GM12878 (cell line): ENCODE measurements at regions of chr3 and their contacts with region 1.

Region 1: GRCh38 chr3:55662683-55663082 is 175.6 kb upstream of the WNT5A start:
- DNase-seq: no peak
- ATAC-seq: no peak
- H3K4me3 ChIP-seq: no peak overlapping the region
- H3K27ac ChIP-seq: no peak overlapping the region
- H3K4me1 ChIP-seq: peaks cover 35% of the 10 kb centered on the region
- H3K27me3 ChIP-seq: no peaks in the 10 kb centered on the region
- CTCF ChIP-seq: no peak
- EP300 ChIP-seq: no peak
- POLR2A ChIP-seq: no peak
- RAD21 ChIP-seq: no peak

Region 2: DNA sequence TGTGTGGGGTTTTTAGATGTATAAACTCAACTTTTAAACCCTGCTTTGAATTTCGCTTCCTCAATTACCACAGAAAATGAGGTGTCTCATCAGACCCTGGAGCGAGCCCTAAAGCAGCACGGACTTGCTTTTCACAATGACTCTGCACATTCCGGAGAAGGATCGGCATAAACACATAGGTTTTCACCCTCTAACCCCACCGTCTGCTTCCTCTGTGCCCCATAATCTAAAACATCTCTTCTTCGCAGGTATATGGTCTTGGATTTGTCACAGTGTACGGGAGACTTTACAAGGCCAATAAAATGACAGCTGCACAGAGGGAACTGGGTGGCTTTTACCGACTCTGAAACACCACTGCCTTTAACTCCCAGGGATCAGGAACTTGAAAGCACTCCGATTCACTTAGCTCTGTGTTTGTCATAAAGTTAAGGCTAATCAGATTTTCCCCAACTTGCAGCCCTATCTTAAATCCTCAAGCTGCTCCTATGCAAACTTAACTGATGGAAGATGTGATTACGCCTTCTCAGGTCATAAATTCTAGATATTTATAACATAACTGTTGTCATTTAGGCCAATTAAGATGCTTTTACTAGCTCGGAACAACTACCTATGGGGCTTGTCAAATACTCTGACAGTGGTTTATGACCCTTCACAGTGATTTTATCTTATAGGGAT is 42.2 kb before region 1 on chr3:
- CTCF ChIA-PET with region 1: interaction called, 6 read pairs
- POLR2A ChIA-PET with region 1: interaction called, 3 read pairs
- RAD21 ChIA-PET with region 1: interaction called, 7 read pairs
- SMC1A ChIA-PET with region 1: interaction called, 30 read pairs
- in situ Hi-C with region 1: no loop called
- intact Hi-C with region 1: no loop called
- DNase-seq: peak; percentile 59
- ATAC-seq: peak; percentile 84
- H3K4me3 ChIP-seq: peak overlapping the region; percentile 18; the same call in 1 of the 2 replicates
- H3K27ac ChIP-seq: peak overlapping the region; percentile 75
- H3K4me1 ChIP-seq: peaks cover 47% of the 10 kb centered on the region
- H3K27me3 ChIP-seq: no peaks in the 10 kb centered on the region
- CTCF ChIP-seq: no peak
- EP300 ChIP-seq: no peak
- POLR2A ChIP-seq: no peak
- RAD21 ChIP-seq: no peak

Region 3: DNA sequence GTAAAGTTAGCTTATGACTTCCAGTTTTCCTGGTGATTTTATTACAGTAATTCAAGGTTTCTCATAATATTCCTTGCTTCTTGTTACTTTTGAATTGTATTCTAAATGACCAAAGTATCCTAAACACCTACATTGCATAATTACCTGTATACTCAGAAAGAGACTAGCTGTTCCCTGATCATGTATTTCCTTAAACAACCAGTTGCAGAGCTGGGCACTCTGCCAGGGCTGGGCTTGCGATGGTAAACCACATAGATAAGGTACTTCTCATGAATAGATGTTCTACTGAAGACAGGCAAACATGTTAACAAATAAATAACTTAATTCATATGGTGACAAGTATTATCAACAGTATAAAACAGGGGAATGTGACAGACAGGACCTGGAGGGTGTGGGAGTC is 33.3 kb before region 1 on chr3:
- CTCF ChIA-PET with region 1: interaction called, 4 read pairs
- POLR2A ChIA-PET with region 1: interaction called, 3 read pairs
- RAD21 ChIA-PET with region 1: interaction called, 11 read pairs
- SMC1A ChIA-PET with region 1: interaction called, 6 read pairs
- in situ Hi-C with region 1: no loop called
- intact Hi-C with region 1: no loop called
- DNase-seq: no peak
- ATAC-seq: no peak
- H3K4me3 ChIP-seq: no peak overlapping the region
- H3K27ac ChIP-seq: no peak overlapping the region
- H3K4me1 ChIP-seq: peaks cover 14% of the 10 kb centered on the region
- H3K27me3 ChIP-seq: no peaks in the 10 kb centered on the region
- CTCF ChIP-seq: no peak
- EP300 ChIP-seq: no peak
- POLR2A ChIP-seq: no peak
- RAD21 ChIP-seq: no peak

Region 4: GRCh38 chr3:55675478-55675877 is 12.8 kb after region 1 on chr3:
- CTCF ChIA-PET with region 1: interaction called, 7 read pairs
- POLR2A ChIA-PET with region 1: interaction called, 23 read pairs
- RAD21 ChIA-PET with region 1: interaction called, 14 read pairs
- SMC1A ChIA-PET with region 1: interaction called, 34 read pairs
- in situ Hi-C with region 1: no loop called
- intact Hi-C with region 1: no loop called
- DNase-seq: peak; percentile 93
- ATAC-seq: peak; percentile 99
- H3K4me3 ChIP-seq: peak overlapping the region; percentile 17; the same call in 1 of the 2 replicates
- H3K27ac ChIP-seq: peak overlapping the region; percentile 55
- H3K4me1 ChIP-seq: peaks cover 41% of the 10 kb centered on the region
- H3K27me3 ChIP-seq: no peaks in the 10 kb centered on the region
- CTCF ChIP-seq: peak; percentile 6 to 33 (median 21); a peak in 1 of 6 replicates
- EP300 ChIP-seq: peak; percentile 67 to 83; a peak in 3 of 4 replicates
- POLR2A ChIP-seq: no peak
- RAD21 ChIP-seq: peak; percentile 28; the same call in 1 of the 2 replicates